Upper lobe of right lung (tissue), 1 donor: ENCODE measurements at regions of chr9 and their contacts with region 1.

Region 1: DNA sequence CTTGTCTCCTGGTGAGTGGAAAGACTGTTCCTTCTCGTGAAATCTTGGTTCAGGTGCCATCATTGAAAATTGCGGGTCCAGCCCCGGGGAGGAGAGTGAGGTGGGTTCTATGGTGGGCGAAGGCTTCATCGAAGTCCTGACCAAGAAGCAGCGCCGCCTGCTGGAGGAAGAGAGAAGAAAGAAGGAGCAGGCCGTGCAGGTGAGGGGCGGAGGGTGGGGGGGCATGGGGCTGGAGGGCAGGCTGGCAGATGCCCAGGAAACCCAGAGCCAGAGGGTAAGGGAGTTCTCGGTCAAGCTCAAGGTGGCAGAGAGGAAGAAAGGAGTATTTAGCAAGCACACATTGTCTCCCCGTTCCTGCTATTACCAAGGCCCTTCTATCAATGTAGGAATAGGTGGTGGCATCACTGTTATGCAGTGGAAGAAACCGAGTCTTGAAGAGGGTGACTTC is 24.3 kb upstream of the POMT1 start:
- DNase-seq: peak; percentile 56
- ATAC-seq: peak; percentile 31
- H3K4me3 ChIP-seq: no peak overlapping the region
- H3K27ac ChIP-seq: no peak overlapping the region
- H3K4me1 ChIP-seq: no peaks in the 10 kb centered on the region
- H3K27me3 ChIP-seq: no peaks in the 10 kb centered on the region
- CTCF ChIP-seq: peak; percentile 54

Region 2: DNA sequence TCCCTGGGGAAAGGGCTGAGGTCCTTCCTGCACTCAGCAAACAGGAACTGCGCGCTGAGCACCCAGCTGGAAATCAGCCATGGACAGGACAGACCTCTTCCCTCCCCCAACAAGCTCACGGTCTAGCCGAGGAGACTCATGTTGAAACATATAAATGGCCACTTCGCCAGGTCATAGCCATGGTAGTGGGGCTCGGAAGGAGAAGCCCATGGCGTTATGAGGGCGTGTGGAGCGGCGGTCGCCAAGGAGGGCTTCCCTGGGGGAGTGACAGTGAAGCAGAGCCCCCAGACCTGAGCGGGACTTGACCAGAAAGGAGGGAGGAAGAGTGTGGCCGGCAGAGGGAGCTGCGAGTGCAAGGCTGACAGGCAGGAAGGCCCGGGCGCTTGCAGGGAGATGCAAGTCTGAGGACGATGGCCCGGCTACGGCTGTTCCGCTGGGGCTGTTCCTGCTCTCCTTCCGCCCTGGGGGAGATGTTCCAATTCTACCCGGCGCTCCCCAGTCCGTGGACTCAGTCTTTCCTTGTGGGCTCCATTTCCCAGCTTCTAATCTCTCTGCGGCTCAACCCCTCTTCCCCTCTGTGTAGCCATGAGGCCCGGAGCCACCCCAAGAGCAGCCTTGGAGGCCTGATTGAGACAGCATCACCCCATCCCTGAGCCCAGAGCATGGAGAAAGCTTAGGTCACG is 128.4 kb before region 1 on chr9:
- intact Hi-C with region 1: loop called (anchors 10 kb)
- DNase-seq: peak; percentile 95
- ATAC-seq: peak; percentile 98
- H3K4me3 ChIP-seq: peak overlapping the region; percentile 29
- H3K27ac ChIP-seq: no peak overlapping the region
- H3K4me1 ChIP-seq: peaks cover 9% of the 10 kb centered on the region
- H3K27me3 ChIP-seq: no peaks in the 10 kb centered on the region
- CTCF ChIP-seq: peak; percentile 88

Region 3: DNA sequence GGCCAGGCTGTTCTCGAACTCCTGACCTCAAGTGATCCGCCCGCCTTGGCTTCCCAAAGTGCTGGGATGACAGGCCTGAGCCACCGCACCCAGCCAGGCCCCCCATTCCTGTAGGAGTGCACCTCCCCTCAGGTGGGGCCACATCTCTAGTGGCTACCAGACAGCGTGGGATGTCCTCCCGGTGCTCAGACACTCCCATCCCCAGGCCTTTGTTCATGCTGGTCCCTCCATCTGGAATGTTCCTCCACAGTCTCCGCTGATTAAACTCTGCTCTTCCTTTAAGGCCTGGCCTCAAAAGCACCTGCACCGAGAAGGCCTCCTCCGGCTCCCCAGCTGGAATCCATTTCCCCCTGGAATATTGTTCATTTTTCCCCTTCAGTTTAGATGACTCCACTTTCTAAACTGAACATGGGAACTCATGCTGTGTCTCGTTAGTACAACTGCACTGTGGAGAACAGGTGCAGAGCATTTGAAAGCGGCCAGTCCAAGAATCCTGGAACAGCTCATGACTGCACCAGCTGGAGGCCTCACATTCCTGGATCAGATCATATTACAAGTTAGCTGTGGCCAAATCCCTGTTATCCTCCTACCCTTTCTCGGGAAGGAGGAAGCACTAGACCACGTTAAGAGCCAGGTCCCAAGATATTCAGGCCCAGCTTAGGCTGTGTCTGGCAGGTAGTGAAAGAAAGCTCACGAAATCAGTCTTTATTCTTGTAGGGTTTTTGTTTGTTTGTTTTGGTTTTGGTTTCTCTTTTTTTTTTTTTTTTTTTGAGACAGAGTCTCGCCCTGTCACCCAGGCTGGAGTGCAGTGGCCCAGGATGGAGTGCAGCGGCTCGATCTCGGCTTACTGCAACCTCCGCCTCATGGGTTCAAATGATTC is 95.4 kb before region 1 on chr9:
- intact Hi-C with region 1: no loop called
- DNase-seq: no peak
- ATAC-seq: peak; percentile 89
- H3K4me3 ChIP-seq: no peak overlapping the region
- H3K27ac ChIP-seq: peak overlapping the region; percentile 65
- H3K4me1 ChIP-seq: no peaks in the 10 kb centered on the region
- H3K27me3 ChIP-seq: no peaks in the 10 kb centered on the region
- CTCF ChIP-seq: no peak

Region 4: DNA sequence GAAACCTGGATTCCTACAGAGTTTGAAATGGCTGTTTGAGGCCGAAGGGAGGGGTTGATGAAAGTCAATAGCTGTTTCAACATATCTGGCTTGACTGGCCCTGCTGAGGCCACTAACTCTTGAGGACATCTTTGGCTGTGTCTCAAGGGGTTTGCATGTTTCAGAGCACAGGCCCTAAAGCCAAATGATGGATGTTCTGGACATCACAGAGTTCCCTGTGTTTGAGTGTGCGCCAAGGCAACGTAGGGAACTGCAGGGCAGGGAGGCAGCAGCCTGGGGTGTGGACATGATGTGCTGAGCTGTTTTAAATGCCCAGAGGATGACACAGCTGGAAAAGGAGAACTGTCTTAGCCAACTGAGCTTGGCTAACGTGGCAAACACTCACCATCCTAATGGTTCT is 171.8 kb after region 1 on chr9:
- intact Hi-C with region 1: no loop called
- DNase-seq: no peak
- ATAC-seq: peak; percentile 88
- H3K4me3 ChIP-seq: no peak overlapping the region
- H3K27ac ChIP-seq: peak overlapping the region; percentile 65
- H3K4me1 ChIP-seq: peaks cover 27% of the 10 kb centered on the region
- H3K27me3 ChIP-seq: no peaks in the 10 kb centered on the region
- CTCF ChIP-seq: no peak